Heart left ventricle (tissue), 16 donors: ENCODE measurements at regions of chr15 and their contacts with region 1.

Region 1: DNA sequence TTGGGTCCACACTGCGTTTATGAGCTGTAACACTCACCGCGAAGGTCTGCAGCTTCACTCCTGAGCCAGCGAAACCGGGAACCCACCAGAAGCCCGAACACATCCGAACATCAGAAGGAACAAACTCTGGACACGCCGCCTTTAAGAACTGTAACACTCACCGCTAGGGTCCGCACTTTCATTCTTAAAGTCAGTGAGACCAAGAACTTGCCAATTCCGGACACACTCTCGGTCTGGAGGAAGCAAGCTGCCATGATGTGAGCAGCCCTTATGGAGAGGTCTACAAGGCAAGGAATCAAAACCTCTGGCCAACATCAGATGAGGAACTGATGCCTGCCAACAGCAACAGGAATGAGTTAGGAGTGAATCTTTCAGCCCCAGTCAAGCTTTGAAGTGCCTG is 62.9 kb downstream of the SLC28A2 start:
- DNase-seq: peak in 3 of 5 donors; percentile 23 to 39 (median 23)
- ATAC-seq: no peak
- H3K4me3 ChIP-seq: no peak overlapping the region
- H3K27ac ChIP-seq: no peak overlapping the region
- H3K4me1 ChIP-seq: peaks cover 0 to 7% (median 0%) of the 10 kb centered on the region in 12 donors
- H3K27me3 ChIP-seq: peaks cover 0 to 4% (median 0%) of the 10 kb centered on the region in 9 donors
- CTCF ChIP-seq: peak in 8 of 12 donors; percentile 6 to 43 (median 29)
- POLR2A ChIP-seq: no peak

Region 2: DNA sequence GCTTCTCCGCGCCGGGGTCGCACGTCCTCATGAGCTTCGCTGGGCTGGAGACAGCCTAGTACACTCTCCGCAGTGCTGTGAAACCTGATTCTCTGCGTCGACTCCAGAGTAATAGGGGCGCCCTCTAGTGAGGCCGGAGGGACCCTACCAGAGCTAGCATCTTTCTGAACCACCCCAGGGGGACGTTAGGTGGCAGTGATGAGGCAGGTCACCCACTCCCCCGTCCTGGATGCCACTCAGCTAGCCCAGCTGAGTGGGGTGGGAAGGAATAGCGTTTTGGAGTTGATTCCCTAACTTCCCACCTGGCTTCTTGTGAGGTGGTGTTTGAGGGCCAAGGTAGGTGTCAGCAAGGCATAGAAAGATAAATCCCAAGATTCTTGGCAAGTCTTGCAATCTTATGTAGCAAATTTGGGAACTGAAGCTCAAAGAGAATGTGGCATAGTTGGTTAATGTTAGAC is 196.8 kb before region 1 on chr15:
- intact Hi-C with region 1: no loop called
- DNase-seq: peak; percentile 83 to 89 (median 87)
- ATAC-seq: peak; percentile 94 to 99 (median 96)
- H3K4me3 ChIP-seq: peak overlapping the region in 10 of 12 donors; percentile 2 to 49 (median 30)
- H3K27ac ChIP-seq: no peak overlapping the region
- H3K4me1 ChIP-seq: peaks cover 0 to 29% (median 15%) of the 10 kb centered on the region in 12 donors
- H3K27me3 ChIP-seq: peaks cover 30 to 92% (median 54%) of the 10 kb centered on the region in 9 donors
- CTCF ChIP-seq: peak; percentile 87 to 100 (median 97)
- POLR2A ChIP-seq: no peak

Region 3: DNA sequence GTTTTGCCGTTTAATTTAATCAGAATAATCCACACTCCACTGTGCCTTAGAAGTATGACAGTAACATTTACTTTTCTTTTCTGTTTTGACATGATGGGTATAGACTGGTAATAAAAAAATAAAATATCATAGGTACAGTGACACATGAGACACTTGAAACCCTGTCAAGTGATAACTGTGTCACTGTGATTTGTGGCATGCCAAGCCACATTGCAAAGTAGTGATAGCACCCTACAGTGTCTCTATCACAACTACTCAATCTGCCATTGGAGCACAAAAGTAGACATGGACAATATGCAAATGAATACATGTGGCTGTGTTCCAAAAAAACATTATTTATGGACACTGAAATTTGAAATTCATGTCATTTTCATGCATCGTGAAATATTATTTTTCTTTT is 40.9 kb after region 1 on chr15:
- intact Hi-C with region 1: loop called in 1 of 10 experiments (anchors 5 kb)
- DNase-seq: no peak
- ATAC-seq: peak in 1 of 4 donors; percentile 66
- H3K4me3 ChIP-seq: no peak overlapping the region
- H3K27ac ChIP-seq: no peak overlapping the region
- H3K4me1 ChIP-seq: no peaks in the 10 kb centered on the region
- H3K27me3 ChIP-seq: no peaks in the 10 kb centered on the region
- CTCF ChIP-seq: no peak
- POLR2A ChIP-seq: no peak